ENCODE measurements at regions of chr10 and their contacts with region 1.

Region 1: GRCh38 chr10:132654702-132655661 is 117.4 kb downstream of the INPP5A start:
- DNase-seq: peak; percentile 73
- ATAC-seq: peak; percentile 47

Region 2: DNA sequence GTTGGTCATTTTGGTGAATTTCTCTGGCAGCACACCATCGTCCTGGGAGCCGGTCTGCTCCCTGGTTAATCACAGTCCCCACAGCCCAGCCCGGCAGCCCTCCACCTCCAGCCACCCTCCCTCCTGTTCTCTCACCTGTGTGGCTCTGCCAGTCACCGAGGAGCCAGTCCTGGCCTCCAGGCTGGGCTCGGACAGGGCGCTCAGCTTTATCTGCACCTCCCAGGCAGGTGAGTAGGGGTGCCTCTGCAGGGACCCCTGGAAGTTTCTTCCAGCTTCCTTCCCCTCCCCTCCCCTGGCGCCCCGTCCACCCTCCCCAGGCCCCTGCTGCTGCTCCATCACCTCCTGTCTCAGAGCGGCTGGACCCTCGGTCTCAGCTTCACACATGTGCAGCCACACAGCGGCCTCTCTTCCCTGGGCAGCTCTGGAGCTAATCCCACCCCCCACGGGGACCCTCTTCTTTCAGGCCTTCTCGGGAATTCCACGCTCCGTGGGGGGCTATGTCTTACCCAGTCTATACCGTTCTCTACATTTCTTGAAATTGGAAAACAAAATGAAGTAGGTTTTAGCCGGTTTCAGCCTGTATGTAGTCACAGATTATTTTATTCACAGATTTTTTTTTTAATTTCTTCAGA is 968.1 kb before region 1 on chr10:
- intact Hi-C with region 1: no loop called
- DNase-seq: no peak
- ATAC-seq: no peak

Region 3: DNA sequence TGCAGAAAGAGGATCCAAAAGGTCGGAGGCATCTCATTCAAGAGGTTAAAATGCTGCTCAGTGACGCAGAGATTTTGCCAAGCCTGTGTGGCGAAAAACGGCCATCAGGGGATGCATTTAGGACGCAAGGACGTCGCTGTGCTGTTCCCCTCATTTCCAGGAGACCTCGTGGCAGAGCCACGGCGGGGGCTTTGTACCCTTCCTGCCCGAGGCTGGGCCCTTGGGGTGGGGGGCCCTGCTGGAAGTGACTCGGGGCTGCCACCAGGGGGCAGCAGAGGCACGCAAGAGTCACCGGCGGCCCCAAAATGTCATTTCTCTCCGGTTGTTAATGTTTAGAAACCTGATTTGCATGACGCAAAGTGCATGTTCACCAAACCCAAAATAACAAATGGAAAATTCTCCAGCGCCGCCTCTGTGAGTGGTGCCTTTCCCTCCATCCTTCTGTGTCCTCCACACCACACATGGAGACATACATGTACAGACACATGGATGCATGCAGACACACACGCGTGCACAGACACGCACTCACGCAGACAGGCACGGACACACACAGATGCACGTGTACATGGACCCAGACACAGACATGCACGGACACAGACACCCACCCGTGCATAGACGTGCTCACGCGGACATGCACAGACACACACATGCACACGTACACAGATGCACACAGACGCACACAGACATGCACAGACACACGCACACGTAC is 182.0 kb after region 1 on chr10:
- intact Hi-C with region 1: loop called (anchors 5 kb)
- DNase-seq: no peak
- ATAC-seq: peak; percentile 74